MCF 10A (cell line): ENCODE measurements at regions of chr1 and their contacts with region 1.

Region 1: DNA sequence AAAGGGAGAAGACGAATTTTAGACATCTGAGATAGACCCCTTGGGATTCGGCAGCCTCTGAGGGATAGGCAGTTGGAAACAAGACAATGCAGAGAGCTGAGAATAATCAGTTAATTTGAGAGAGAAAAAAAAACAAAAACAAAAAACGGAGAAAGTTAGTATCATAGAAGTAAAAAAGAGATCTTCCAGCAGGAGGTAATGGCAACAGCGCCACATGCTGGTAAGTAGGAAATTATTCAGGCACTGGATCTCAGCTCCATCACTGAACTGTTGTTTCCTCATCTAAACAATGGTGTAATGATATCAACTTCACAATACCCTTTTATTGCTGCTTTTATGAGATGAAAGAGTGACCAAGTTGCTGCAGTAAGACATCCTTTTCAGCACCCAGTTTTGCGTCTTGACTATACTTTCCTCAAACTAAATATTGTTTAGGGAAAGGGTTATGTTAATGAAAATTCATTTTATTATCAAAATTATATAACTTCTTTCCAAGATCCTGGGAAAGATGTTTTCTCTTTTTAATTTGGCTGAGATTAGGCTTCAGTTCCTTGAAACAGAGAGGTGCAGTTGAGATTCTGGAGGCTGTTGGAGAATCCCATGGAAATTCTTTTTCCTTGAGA is 91.4 kb upstream of the KCNA3 start:
- DNase-seq: peak; percentile 58
- H3K4me3 Mint-ChIP-seq: no peak overlapping the region
- H3K27ac Mint-ChIP-seq: no peak overlapping the region
- H3K4me1 Mint-ChIP-seq: no peaks in the 10 kb centered on the region
- H3K27me3 Mint-ChIP-seq: peaks cover 58% of the 10 kb centered on the region
- CTCF ChIP-seq: peak; percentile 83

Region 2: DNA sequence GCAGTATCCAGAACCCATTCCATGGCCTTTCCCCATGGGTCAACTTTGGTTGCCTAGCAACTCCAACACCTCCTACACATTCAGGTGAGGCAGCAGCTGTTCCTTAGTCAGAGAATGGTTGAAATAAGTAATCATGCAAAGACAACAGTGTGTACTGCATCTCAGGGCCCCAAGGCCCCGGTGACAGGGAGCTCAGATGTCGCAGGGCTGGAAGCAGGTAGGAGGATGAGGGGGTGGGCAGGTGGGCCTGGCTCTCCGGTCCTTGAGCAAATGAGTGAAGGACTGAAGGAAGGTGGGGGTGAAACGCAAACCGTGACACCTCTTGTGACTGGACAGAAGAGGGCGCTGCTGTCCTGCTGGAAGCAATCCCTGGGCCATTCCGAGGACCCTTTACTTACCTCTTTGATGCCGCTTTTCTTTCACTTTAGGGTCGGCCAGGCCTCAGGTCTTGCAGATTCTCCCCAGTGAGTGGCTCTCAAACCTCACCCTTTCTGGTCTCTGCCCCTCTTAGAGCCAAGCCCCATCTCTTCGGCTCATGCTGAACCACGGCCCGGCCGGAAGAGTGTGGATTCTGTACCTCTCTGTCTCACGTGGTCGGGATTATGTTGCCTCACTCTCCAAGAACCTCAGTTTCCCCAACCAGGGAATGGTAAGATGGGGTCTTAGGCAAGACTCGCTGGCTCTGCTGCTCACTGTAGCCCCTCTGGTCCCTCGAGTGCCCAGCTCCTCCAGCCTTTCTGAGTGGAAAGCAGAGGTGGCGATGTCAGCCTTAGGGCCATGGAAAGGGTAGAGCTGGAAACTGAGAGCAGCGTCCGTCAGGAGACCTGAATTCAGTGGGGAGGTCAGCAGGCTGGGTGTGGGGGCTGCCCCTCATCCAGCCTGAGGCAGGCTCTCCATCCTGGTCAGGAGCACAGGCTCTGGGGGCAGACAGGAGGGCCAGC is 241.6 kb before region 1 on chr1:
- CTCF ChIA-PET with region 1: interaction called, 4 read pairs
- POLR2A ChIA-PET with region 1: no interaction called
- intact Hi-C with region 1: loop called (anchors 5 kb)
- DNase-seq: peak; percentile 40
- H3K4me3 Mint-ChIP-seq: no peak overlapping the region
- H3K27ac Mint-ChIP-seq: no peak overlapping the region
- H3K4me1 Mint-ChIP-seq: peaks cover 8% of the 10 kb centered on the region
- H3K27me3 Mint-ChIP-seq: peaks cover 65% of the 10 kb centered on the region
- CTCF ChIP-seq: peak; percentile 78

Region 3: DNA sequence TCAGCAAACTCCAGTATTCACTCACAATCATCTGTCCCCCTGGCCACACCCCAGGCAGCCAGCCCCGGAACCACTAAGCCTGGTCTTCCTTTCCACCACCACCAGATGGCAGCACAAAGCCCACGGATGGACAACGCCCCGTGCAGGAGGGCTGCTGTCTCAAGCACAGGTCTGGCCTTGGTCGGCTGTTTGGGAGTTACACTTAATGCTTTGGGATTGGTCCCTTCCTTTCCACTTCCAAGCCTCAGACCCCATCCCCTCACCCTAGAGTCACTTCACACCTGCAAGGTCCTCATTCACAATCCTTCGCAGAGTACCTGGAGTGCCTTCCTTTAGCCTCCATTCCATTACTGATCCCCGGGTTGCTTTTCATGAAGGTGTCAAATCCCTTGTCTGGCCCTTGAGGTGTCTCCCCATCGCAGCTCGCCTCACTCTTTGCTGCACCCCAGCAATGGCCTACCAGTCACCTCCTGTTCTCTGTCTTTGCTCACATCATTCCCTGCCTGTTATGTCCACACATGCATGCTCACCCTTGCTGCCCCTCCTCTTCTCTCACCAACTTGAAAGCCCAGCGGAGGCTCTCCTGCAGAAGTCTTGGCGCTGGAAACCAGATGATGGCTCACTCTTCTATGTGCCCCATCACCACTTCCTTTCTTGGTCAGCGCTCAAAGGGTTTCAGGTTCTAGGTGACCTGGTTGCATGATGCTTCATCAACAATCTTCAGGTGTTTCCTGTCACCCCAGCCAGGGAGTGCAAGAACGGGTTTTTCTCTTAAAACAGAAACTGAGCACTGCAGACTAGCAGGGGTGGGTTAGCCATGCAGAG is 135.1 kb before region 1 on chr1:
- CTCF ChIA-PET with region 1: interaction called, 51 read pairs
- POLR2A ChIA-PET with region 1: interaction called, 5 read pairs
- intact Hi-C with region 1: loop called (anchors 1 kb)
- DNase-seq: peak; percentile 74
- H3K4me3 Mint-ChIP-seq: no peak overlapping the region
- H3K27ac Mint-ChIP-seq: no peak overlapping the region
- H3K4me1 Mint-ChIP-seq: peaks cover 13% of the 10 kb centered on the region
- H3K27me3 Mint-ChIP-seq: peaks cover 31% of the 10 kb centered on the region
- CTCF ChIP-seq: peak; percentile 80

Region 4: GRCh38 chr1:110707232-110707631 is 58.9 kb before region 1 on chr1:
- CTCF ChIA-PET with region 1: interaction called, 12 read pairs
- POLR2A ChIA-PET with region 1: no interaction called
- intact Hi-C with region 1: no loop called
- DNase-seq: no peak
- H3K4me3 Mint-ChIP-seq: no peak overlapping the region
- H3K27ac Mint-ChIP-seq: no peak overlapping the region
- H3K4me1 Mint-ChIP-seq: no peaks in the 10 kb centered on the region
- H3K27me3 Mint-ChIP-seq: peaks cover 17% of the 10 kb centered on the region
- CTCF ChIP-seq: no peak